Breast epithelium (tissue), 4 donors: ENCODE measurements at regions of chr10 and their contacts with region 1.

Region 1: DNA sequence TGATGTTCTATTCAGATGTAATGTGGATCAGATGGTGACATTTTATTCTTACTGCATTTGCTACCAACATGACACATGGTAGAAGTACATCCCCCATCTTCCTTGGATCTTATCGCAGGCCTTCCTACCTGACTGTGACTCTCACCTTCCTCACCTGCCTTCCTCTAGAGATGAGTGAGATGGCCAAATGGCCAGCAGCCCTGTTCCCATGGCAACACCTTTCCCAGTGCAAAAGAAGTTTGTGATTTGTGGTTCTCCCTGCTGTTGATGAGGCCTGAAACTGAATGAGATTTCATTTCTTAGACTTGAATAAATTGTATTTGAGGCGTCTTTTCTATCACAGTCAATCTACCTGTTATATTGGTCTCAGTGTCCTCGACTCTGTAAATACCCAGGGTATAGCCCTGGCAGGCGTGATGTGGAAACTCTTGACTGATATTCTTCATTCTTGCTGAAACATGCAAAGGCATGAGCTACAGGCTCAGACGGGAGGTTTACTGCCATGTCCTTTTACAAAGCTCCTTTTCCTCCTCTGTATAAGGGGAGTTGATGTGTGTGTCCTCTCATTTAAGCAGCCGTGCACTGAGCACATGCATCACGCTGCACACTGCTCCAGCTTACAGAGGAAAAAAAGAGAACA is 440.7 kb upstream of the AKR1E2 start:
- DNase-seq: no peak
- H3K4me3 ChIP-seq: no peak overlapping the region
- H3K27ac ChIP-seq: no peak overlapping the region
- H3K4me1 ChIP-seq: no peaks in the 10 kb centered on the region
- H3K27me3 ChIP-seq: no peaks in the 10 kb centered on the region
- CTCF ChIP-seq: no peak
- POLR2A ChIP-seq: no peak

Region 2: DNA sequence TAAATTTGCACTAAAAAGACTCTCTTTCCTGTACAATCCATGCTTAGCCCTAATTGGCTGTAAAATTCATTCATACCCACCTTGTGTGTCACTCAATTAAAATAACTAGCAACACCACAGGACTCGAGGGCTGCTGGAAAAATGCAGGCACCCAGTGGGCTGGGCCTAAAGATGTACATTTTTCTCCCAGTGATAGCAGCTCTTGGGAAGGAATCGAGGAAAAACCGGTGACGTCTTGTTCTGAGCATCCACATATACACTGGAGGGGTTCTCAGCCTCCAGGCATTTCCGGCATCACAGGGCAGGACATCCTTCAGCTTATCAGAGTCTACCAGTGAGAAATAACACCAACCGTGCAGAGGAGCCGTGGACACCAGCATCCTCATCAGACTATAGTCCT is 1127.0 kb before region 1 on chr10:
- intact Hi-C with region 1: no loop called
- DNase-seq: no peak
- H3K4me3 ChIP-seq: no peak overlapping the region
- H3K27ac ChIP-seq: no peak overlapping the region
- H3K4me1 ChIP-seq: no peaks in the 10 kb centered on the region
- H3K27me3 ChIP-seq: no peaks in the 10 kb centered on the region
- CTCF ChIP-seq: no peak
- POLR2A ChIP-seq: no peak

Region 3: DNA sequence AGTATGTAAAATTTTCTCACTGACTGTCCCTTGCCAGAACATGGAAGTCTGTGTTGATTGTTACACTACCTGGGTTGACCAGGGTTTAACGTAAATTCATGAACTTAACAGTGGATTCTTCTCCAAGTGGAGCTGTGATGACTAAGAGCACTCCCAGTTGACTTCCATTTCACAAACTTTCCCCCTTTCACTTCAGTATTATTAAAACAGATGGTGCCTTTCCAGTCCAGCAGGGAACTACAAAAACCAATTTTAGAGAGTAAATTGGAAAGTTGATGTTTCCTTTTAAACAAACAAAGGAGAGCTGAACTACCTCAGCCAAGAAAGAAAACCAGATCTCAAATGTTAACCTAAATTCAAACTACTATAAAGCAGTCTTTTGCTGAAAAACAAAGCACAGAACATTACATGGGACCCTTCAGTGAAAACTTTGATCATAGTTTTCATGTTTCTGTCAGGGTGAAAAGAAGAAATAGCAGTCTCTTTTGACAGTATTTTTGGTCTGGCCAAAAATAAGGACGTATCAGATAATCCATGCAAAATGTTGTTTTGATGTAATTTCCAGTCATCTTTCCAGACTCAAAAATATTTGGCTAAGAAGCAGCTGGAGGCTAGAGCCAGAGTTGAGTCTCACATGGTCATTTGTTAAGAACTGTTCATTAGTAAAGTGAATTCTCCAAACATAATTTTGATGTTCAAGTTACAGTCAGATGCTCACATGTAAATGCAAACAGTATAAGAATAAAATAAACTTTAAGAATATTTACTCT is 39.3 kb before region 1 on chr10:
- intact Hi-C with region 1: loop called (anchors 5 kb)
- DNase-seq: no peak
- H3K4me3 ChIP-seq: no peak overlapping the region
- H3K27ac ChIP-seq: peak overlapping the region; percentile 29 to 45
- H3K4me1 ChIP-seq: no peaks in the 10 kb centered on the region
- H3K27me3 ChIP-seq: no peaks in the 10 kb centered on the region
- CTCF ChIP-seq: no peak
- POLR2A ChIP-seq: no peak

Region 4: DNA sequence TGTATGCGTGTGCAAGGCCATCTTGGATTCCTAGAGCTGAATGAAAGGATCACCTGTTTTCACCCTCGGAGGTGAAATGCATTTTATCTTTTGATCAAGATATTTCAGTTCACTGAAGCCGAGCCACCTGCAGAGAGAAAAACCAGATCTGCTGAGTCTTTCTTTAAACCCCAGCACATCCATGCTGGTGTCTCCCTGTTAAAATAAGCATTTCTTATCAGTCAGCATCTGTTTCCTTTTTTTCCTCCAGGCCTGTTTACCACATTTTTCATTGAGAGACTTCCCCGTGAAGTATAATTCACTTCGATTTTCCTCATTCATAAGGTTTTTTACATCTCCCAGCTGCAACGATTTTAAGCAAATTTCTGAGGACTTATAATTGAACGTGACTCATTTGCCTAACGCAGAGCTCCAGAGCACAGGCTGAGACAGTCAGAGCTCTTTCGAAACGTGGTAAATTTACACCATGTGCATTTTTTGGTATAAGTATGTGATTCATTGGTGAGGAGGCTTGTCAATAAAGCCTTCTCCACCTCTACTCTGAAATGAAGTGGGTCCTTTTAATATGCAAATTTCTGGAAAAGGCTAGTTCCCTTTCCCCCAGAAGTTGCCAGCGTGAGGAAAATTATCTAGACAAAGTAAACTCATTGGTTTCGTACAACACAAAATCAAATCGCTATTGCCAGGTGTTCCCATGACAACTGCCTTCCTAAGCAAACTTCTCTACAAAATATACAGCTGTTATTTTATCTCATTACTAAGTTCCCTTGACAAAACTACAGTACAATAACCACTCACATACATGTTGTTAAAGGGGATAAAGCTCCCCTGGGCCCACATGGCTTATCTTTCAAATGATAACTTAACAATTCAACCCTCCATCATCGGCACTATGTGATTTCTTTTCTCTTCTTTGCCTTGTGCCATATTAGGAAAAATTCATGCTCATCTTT is 65.9 kb after region 1 on chr10:
- intact Hi-C with region 1: no loop called
- DNase-seq: no peak
- H3K4me3 ChIP-seq: no peak overlapping the region
- H3K27ac ChIP-seq: peak overlapping the region in 1 of 2 donors; percentile 34
- H3K4me1 ChIP-seq: no peaks in the 10 kb centered on the region
- H3K27me3 ChIP-seq: no peaks in the 10 kb centered on the region
- CTCF ChIP-seq: no peak
- POLR2A ChIP-seq: no peak